Tibial artery (tissue), 4 donors: ENCODE measurements at regions of chr6 and their contacts with region 1.

Region 1: DNA sequence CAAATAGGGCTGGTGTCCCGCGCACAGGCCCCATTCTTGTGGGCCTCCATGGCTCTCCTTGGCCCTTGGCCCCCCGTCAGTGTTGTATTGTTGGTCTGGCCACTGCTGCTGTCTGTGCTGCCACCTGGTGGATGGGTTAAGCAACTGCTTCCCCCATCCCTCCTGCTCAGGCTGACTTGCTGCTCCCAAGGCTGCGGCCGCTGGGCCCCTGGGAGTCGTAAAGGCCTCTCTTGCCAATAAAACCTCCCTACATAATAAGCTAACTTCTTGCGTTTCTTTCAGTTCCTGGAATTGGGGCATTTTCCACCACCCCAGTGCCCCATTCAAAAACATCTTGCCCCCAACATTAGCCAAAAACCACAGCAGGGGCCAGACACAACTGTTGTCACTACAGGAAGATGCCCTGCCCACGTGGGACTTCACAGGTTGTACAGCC is 27.1 kb downstream of the CD83 start:
- DNase-seq: peak; percentile 31 to 70
- H3K4me3 ChIP-seq: no peak overlapping the region
- H3K27ac ChIP-seq: no peak overlapping the region
- H3K4me1 ChIP-seq: peaks cover 0 to 5% (median 0%) of the 10 kb centered on the region in 4 donors
- H3K27me3 ChIP-seq: peaks cover 0 to 14% of the 10 kb centered on the region in 2 donors
- CTCF ChIP-seq: peak; percentile 80 to 92

Region 2: DNA sequence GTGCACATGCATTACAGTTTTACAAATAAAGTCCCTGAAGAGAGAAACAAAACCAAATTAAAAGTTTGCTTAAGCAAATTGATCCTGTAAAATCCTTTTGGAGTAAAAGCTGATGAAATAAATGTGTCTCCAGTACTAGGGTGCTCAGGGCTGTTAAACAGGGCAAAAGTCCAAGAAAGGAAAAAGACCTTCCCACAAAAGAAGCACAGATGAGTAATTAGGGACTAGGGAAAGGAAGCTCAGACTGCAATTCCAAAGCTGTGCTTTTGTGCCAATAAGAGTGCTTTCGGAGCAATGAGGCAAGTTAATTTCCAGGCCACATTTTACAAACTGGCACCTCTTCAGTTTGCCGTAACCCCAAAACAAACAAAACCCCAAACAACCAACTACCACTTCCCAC is 230.3 kb before region 1 on chr6:
- intact Hi-C with region 1: loop called (anchors 5 kb)
- DNase-seq: no peak
- H3K4me3 ChIP-seq: no peak overlapping the region
- H3K27ac ChIP-seq: no peak overlapping the region
- H3K4me1 ChIP-seq: no peaks in the 10 kb centered on the region
- H3K27me3 ChIP-seq: peaks cover 0 to 9% of the 10 kb centered on the region in 2 donors
- CTCF ChIP-seq: no peak

Region 3: GRCh38 chr6:14025160-14025559 is 119.5 kb before region 1 on chr6:
- intact Hi-C with region 1: no loop called
- DNase-seq: no peak
- H3K4me3 ChIP-seq: no peak overlapping the region
- H3K27ac ChIP-seq: no peak overlapping the region
- H3K4me1 ChIP-seq: no peaks in the 10 kb centered on the region
- H3K27me3 ChIP-seq: peaks cover 0 to 21% of the 10 kb centered on the region in 2 donors
- CTCF ChIP-seq: no peak

Region 4: DNA sequence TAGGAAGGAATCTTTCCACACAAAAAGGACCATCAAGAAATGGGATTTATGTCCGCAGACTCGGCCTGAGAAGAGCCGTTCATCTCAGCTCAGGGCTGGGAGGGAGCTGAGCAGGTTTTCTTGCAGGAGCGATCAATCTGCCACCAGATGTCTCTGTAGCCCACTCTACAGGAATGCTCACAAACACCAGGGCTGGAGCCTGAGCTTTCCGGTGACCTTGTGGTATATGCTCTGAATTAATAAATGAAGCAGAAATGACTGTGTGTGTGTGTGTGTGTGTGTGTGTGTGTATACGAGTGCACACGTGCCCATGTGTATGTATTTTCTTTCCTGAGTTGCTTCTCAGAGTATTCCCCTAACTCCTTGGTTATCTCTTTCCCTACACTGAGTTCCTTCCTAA is 15.1 kb before region 1 on chr6:
- intact Hi-C with region 1: no loop called
- DNase-seq: peak in 1 of 2 donors; percentile 26
- H3K4me3 ChIP-seq: no peak overlapping the region
- H3K27ac ChIP-seq: no peak overlapping the region
- H3K4me1 ChIP-seq: peaks cover 0 to 10% (median 3%) of the 10 kb centered on the region in 4 donors
- H3K27me3 ChIP-seq: no peaks in the 10 kb centered on the region
- CTCF ChIP-seq: peak; percentile 39 to 43

Region 5: GRCh38 chr6:14265049-14266021 is 120.6 kb after region 1 on chr6:
- intact Hi-C with region 1: no loop called
- DNase-seq: no peak
- H3K4me3 ChIP-seq: no peak overlapping the region
- H3K27ac ChIP-seq: no peak overlapping the region
- H3K4me1 ChIP-seq: no peaks in the 10 kb centered on the region
- H3K27me3 ChIP-seq: no peaks in the 10 kb centered on the region
- CTCF ChIP-seq: no peak